B cell (primary cell): ENCODE measurements at regions of chr11 and their contacts with region 1.

Region 1: DNA sequence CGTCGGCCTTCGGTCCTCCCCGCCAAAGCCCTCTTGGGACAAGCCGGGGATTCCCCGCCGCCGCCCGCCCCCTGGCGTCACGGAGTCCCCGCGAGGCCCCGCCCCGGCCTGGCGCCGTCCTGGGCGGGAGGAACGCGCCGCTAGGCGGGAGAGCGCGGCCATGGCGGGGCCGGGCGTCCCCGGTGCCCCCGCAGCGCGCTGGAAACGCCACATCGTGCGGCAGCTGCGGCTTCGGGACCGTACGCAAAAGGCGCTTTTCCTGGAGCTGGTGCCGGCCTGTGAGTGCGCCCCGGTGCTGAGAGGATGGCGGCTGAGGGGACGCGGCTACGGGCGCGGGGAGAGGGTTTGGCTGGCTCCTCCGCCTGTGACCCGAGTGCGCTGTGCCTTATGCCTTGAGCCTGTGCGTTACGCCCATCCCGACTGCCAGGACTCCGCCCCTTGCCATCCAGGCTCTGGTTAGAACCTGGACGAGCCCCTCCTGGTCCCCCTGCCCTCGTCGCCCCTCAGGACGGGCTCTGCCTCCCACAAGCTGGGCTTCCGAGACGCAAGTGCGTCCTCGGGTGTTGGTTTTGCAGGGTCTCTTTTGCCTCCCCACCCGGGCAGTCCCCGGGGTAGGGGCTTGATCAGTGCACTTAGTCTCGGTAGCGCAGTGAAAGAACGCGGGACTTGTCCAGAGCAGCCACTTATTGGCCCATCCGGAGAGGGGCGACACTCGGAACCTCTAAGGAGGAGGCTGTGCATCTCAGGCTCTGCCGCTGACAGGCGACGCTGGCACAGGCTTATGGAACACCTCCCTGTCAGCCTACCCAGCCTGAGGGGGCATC is at the start of gene ATG16L2:
- DNase-seq: no peak
- ATAC-seq: peak; percentile 80
- H3K4me3 ChIP-seq: peak within 1 kb of the TSS; percentile 94 to 99 (median 98)
- H3K4me3 Mint-ChIP-seq: peak within 1 kb of the TSS; percentile 99
- H3K27ac ChIP-seq: peak within 1 kb of the TSS; percentile 95 to 98
- H3K27ac Mint-ChIP-seq: peak within 1 kb of the TSS; percentile 98
- H3K4me1 ChIP-seq: peaks cover 18 to 36% of the 10 kb centered on the region in 2 donors
- H3K4me1 Mint-ChIP-seq: peaks cover 45% of the 10 kb centered on the region
- H3K27me3 ChIP-seq: no peaks in the 10 kb centered on the region
- H3K27me3 Mint-ChIP-seq: no peaks in the 10 kb centered on the region
- CTCF ChIP-seq: peak; percentile 34
- total RNA-seq, gene ATG16L2: 212 and 228 TPM in 2 replicates

Region 2: GRCh38 chr11:72736452-72737069 is 77.9 kb before region 1 on chr11:
- CTCF ChIA-PET with region 1: interaction called, 8 read pairs
- POLR2A ChIA-PET with region 1: interaction called, 7 read pairs
- intact Hi-C with region 1: loop called (anchors 1 kb)
- DNase-seq: peak; percentile 87
- ATAC-seq: peak; percentile 42
- H3K4me3 ChIP-seq: peak overlapping the region in 4 of 5 experiments; percentile 13 to 67 (median 42)
- H3K4me3 Mint-ChIP-seq: peak overlapping the region; percentile 86
- H3K27ac ChIP-seq: peak overlapping the region; percentile 97 to 99
- H3K27ac Mint-ChIP-seq: peak overlapping the region; percentile 99
- H3K4me1 ChIP-seq: peaks cover 76 to 87% of the 10 kb centered on the region in 2 donors
- H3K4me1 Mint-ChIP-seq: peaks cover 83% of the 10 kb centered on the region
- H3K27me3 ChIP-seq: no peaks in the 10 kb centered on the region
- H3K27me3 Mint-ChIP-seq: no peaks in the 10 kb centered on the region
- CTCF ChIP-seq: no peak

Region 3: DNA sequence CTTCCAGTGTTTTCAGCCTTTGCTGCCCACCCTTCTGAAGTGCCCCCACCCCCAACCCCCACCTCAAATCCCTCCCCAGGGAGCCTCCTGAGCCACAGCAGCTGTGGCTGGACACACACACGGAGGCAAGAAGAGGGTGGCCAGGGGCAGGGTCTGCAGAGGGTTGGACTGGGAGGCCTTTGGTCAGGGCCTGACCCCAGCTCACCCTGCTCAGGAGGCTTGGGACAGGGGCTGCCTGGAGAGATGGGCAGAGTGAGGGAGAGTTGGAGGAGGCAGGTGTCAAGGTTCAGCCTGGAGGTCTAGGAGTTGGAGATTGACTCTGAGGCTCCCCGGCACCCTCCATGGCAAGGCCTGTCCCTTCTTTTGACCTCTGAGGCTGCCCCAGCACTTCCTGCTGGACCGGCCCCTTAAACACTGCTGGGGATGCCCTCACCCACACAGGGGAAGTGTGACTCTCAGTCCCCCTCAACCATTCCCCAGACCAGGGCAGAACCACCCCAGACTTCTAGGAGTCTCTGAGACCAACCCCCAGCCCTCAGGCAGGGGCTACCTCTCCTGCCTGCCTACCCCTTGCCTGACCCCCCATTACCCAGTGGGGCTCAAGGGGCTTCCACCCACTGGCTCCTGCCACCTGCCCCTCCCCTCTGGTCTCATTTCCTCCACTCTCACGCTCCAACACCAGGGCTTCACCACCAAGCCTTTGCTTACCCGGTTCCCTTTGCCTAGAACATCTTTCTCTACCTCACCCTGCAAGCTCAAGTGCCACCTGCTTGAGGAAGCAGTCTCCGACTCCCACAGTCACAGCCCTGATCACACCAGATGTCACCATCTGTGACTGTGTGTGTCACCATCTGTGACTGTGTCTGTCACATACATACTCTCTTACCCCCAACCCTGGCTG is 70.9 kb before region 1 on chr11:
- CTCF ChIA-PET with region 1: interaction called, 8 read pairs
- POLR2A ChIA-PET with region 1: interaction called, 13 read pairs
- intact Hi-C with region 1: loop called (anchors 1 kb)
- DNase-seq: peak; percentile 90
- ATAC-seq: peak; percentile 81
- H3K4me3 ChIP-seq: no peak overlapping the region
- H3K4me3 Mint-ChIP-seq: peak overlapping the region; percentile 69
- H3K27ac ChIP-seq: peak overlapping the region; percentile 97 to 99
- H3K27ac Mint-ChIP-seq: peak overlapping the region; percentile 91
- H3K4me1 ChIP-seq: peaks cover 87 to 94% of the 10 kb centered on the region in 2 donors
- H3K4me1 Mint-ChIP-seq: peaks cover 89% of the 10 kb centered on the region
- H3K27me3 ChIP-seq: no peaks in the 10 kb centered on the region
- H3K27me3 Mint-ChIP-seq: no peaks in the 10 kb centered on the region
- CTCF ChIP-seq: no peak

Region 4: DNA sequence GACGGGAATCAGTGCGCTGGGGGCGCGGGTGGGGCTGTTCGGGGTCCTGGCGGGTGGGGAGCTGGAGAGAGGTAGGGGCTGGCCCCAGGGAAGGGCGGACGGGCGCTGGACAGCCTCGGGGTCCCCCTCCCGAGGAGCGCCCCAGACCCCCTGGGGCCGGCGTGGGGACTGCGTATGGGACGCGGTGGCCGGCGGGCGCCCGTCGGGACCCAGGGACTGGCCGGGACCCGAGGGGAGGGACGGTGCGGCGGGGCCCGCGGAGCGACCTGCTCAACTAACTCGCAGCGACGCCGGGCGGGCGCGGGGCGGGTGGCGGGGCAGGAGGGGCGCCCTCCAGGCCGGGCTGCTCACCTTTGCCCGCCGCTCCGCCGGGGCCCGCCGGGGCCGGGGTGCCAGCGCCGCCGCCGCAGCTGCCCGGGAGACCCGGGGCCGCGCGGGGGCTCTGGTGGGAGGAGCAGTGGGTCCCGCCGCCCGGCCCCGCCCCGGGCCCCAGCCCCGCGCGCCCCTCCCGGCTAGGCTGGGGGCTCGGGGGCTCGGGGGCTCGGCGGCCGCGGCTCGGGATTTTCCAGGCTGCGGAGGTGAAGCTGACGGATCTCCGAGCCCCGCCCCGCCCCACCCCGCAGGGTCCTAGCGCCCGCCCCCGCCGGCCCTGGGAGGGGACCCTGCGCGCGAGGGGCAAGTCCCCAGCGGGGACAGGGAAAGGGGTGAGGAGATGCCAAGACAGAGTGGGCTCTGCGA is 33.0 kb before region 1 on chr11:
- CTCF ChIA-PET with region 1: interaction called, 5 read pairs
- POLR2A ChIA-PET with region 1: no interaction called
- intact Hi-C with region 1: loop called (anchors 1 kb)
- DNase-seq: peak; percentile 77
- ATAC-seq: peak; percentile 87
- H3K4me3 ChIP-seq: peak overlapping the region; percentile 4 to 77 (median 61)
- H3K4me3 Mint-ChIP-seq: peak overlapping the region; percentile 81
- H3K27ac ChIP-seq: peak overlapping the region in 1 of 2 donors; percentile 56
- H3K27ac Mint-ChIP-seq: peak overlapping the region; percentile 51
- H3K4me1 ChIP-seq: peaks cover 25 to 29% of the 10 kb centered on the region in 2 donors
- H3K4me1 Mint-ChIP-seq: peaks cover 37% of the 10 kb centered on the region
- H3K27me3 ChIP-seq: no peaks in the 10 kb centered on the region
- H3K27me3 Mint-ChIP-seq: no peaks in the 10 kb centered on the region
- CTCF ChIP-seq: no peak

Region 5: DNA sequence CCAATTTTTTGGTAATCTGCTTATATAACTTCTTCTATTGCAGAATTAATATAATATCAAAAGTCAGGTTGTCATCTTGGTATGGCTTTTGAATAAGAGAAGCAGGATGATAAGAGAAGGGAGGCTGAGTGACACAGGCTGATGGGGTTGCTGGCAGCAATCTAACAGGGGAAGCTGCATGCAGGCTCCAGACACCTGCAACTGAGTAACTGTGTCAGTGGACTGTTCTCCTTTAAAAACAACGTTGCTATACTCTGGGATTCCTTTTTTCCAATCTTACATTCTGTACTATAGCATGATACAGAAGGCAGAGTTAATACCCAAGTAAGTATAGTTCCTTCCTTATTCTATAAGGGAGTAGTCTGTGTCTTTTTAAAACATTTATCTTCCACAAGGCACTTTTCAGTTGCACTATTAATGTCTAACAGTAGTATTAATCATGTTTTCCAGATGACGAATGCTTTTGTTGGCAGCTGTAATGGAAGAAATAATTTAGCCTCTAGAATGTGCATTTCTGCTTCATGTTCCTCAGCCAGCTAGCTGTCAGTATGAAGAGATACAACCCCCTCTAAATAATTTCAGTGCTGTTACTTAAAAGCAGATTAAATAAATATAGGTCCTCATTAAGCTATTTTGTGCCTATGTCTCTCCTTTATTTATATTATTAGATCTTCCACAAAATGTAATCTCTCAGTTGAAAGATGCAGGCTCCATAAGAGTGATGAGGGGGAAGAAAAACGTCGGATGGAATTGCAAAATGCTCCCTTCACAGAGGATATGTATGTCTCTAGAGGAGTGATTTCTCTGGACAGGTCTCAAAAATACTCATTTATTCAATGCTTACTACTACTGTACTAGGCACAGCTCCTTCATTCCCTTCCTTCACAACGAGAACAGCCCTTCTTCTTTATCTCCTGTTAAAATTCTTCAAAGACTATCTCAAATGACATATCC is 50.5 kb after region 1 on chr11:
- CTCF ChIA-PET with region 1: no interaction called
- POLR2A ChIA-PET with region 1: no interaction called
- intact Hi-C with region 1: no loop called
- DNase-seq: no peak
- ATAC-seq: no peak
- H3K4me3 ChIP-seq: no peak overlapping the region
- H3K4me3 Mint-ChIP-seq: no peak overlapping the region
- H3K27ac ChIP-seq: peak overlapping the region in 1 of 2 donors; percentile 66
- H3K27ac Mint-ChIP-seq: peak overlapping the region; percentile 78
- H3K4me1 ChIP-seq: no peaks in the 10 kb centered on the region
- H3K4me1 Mint-ChIP-seq: peaks cover 12% of the 10 kb centered on the region
- H3K27me3 ChIP-seq: no peaks in the 10 kb centered on the region
- H3K27me3 Mint-ChIP-seq: no peaks in the 10 kb centered on the region
- CTCF ChIP-seq: no peak

Region 6: GRCh38 chr11:73376160-73376802 is 561.8 kb after region 1 on chr11 and contains the start of gene RELT:
- CTCF ChIA-PET with region 1: no interaction called
- POLR2A ChIA-PET with region 1: no interaction called
- intact Hi-C with region 1: loop called (anchors 2 kb)
- DNase-seq: peak; percentile 97
- ATAC-seq: peak; percentile 87
- H3K4me3 ChIP-seq: peak within 1 kb of the TSS; percentile 62 to 95 (median 92)
- H3K4me3 Mint-ChIP-seq: peak within 1 kb of the TSS; percentile 100
- H3K27ac ChIP-seq: peak within 1 kb of the TSS; percentile 98
- H3K27ac Mint-ChIP-seq: peak within 1 kb of the TSS; percentile 99
- H3K4me1 ChIP-seq: peaks cover 65 to 83% of the 10 kb centered on the region in 2 donors
- H3K4me1 Mint-ChIP-seq: peaks cover 75% of the 10 kb centered on the region
- H3K27me3 ChIP-seq: no peaks in the 10 kb centered on the region
- H3K27me3 Mint-ChIP-seq: no peaks in the 10 kb centered on the region
- CTCF ChIP-seq: peak; percentile 94
- total RNA-seq, gene RELT: 92.4 and 97.1 TPM in 2 replicates